Transverse colon (tissue), 4 donors: ENCODE measurements at regions of chrX and their contacts with region 1.

Region 1: DNA sequence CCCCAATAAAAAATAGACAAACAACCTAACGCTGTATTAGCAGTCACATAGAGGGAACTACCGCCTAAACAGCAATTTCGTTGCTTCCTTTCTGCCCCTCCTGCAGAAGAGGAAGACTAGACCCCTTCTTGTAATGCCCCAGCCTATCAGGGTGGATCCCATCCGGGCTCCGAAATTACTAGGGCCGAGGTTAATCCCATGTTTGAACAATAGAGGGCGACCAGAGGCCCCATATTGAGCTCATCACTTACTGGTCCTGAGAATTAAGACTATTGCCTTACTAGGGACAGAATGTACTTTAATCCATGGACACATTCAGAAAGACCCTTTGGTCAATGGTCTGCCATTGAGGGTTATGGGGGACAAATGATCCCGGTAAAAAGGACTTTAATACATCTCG is 11.8 kb upstream of the ZNF630 start:
- DNase-seq: peak; percentile 40
- H3K4me3 ChIP-seq: no peak overlapping the region
- H3K27ac ChIP-seq: no peak overlapping the region
- H3K4me1 ChIP-seq: no peaks in the 10 kb centered on the region
- H3K27me3 ChIP-seq: no peaks in the 10 kb centered on the region
- CTCF ChIP-seq: peak; percentile 46 to 55 (median 51)
- EP300 ChIP-seq: no peak
- POLR2A ChIP-seq: no peak

Region 2: GRCh38 chrX:48475774-48476577 is 392.8 kb after region 1 on chrX and contains the start of gene FTSJ1:
- in situ Hi-C with region 1: loop called in 2 of 4 experiments (anchors 25 kb)
- intact Hi-C with region 1: no loop called
- DNase-seq: peak; percentile 90
- H3K4me3 ChIP-seq: peak within 1 kb of the TSS; percentile 55 to 80 (median 70)
- H3K27ac ChIP-seq: peak within 1 kb of the TSS; percentile 75 to 88 (median 85)
- H3K4me1 ChIP-seq: peaks cover 0 to 16% (median 6%) of the 10 kb centered on the region in 4 donors
- H3K27me3 ChIP-seq: no peaks in the 10 kb centered on the region
- CTCF ChIP-seq: no peak
- EP300 ChIP-seq: no peak
- POLR2A ChIP-seq: peak; percentile 58
- total RNA-seq, gene FTSJ1: 15.3 to 33.2 (median 31.1) TPM

Region 3: DNA sequence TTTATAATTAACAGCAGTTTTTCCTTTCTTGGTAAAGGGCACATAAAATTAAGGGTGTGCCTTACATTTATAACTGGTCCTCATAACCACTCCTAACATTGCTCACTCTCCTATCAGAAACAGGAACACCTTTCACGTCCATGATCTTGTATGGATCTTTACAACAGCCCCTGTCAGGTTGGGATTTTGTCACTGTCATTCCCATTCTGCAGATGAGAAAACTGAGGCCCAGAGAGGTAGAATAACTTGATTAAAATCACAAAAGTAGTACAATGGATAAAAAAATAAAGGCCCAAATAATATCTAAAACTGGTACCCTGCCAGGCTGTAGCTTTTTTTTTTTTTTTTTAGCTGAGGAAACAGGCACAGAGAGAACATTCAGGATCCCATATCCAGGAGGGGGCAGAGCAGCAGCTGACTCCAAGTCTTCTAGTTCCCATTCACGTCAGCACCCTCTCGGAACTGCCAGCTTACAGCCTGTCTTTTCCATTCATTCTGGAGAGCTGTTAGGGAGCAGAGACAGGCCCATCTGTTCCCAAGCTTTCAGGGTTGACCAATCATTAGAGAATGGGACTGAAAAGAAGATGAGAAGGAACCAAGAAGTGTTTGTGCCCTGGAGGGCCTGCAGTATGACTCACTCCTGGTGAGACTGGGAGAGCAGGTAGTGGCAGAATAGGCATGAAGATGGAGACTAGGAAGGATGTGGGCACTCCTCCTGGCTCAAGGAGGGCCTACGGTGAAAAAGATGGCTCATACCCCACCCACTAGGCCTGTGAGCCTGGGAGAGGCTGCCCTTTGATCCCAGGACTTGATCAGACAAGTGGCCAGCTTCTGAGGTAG is 620.6 kb after region 1 on chrX:
- in situ Hi-C with region 1: no loop called
- intact Hi-C with region 1: no loop called
- DNase-seq: no peak
- H3K4me3 ChIP-seq: no peak overlapping the region
- H3K27ac ChIP-seq: no peak overlapping the region
- H3K4me1 ChIP-seq: no peaks in the 10 kb centered on the region
- H3K27me3 ChIP-seq: no peaks in the 10 kb centered on the region
- CTCF ChIP-seq: no peak
- EP300 ChIP-seq: no peak
- POLR2A ChIP-seq: no peak